ENCODE measurements at regions of chr19 and their contacts with region 1.

Region 1: DNA sequence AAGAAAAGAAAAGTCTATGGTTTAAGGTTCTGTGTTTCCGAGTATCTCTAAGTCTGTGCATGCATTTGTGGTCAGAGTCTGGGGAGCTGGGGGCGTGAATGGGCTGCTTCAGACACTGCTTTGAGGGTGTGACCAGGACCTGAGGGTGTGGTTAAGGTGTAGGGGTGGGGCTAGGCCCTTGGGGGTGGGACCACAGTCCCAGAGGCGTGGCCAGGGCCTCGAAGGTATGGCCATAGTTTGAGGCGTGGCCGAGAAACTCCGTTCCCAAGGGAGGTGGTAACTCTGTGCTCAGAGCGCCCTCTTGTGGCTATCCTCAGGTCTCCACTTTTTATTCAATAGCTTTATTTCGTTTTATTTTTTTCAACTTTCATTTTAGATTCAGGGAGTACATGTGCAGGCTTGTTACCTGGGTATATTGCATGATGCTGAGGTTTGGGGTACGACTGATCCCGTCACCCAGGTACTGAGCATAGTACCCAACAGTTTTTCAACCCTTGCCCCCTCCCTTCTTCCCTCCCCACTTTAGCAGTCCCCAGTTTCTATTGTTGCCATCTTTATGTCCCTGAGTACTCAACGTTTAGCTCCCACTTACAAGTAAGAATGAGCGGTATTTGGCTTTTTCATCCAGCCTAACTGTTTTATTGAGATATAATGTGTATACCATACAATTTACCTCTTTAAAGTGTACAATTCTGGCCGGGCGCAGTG is 7.0 kb upstream of the CBLC start:
- DNase-seq: peak; percentile 96
- ATAC-seq: peak; percentile 95
- H3K4me3 ChIP-seq: peak overlapping the region in 1 of 2 experiments; percentile 9; a peak in 1 of 4 replicates
- H3K27ac ChIP-seq: peak overlapping the region; percentile 18; the same call in 1 of the 2 replicates
- H3K4me1 ChIP-seq: peaks cover 33 to 50% of the 10 kb centered on the region in 2 experiments
- H3K27me3 ChIP-seq: no peaks in the 10 kb centered on the region
- CTCF ChIP-seq: peak; percentile 62 to 93 (median 83); a peak in 5 of 6 replicates
- POLR2A ChIP-seq: no peak
- RAD21 ChIP-seq: peak; percentile 99

Region 2: DNA sequence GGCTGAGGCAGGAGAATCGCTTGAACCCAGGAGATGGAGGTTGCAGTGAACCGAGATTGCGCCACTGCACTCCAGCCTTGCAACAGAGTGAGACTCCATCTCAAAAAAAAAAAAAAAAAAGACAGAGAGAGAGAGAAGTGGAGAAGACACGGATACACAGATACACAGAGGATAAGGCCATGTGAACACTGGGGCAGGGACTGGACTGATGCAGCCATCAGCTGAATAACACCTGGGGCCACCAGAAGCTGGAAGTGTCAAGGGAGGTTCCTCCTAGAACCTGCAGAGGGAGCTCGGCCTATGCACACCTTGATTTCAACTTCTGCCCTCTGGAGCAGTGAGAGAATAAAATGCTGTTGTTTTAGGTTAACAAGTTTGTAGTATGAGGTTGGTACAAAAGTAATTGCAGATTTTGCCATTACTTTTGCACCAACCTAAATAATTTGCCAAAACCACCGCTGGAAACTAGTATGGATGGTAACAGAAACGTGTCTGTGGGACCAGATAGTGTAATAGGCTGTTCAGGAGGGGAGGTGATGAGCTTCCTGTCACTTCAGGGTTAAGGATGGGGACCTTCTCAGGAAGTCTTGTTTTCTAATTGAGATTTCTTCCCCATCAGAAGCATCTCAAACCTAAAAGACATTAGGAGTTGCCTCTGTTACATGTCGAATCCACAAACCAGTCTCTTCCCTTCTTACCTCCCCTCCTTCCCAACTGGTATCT is 193.7 kb before region 1 on chr19:
- CTCF ChIA-PET with region 1: interaction called, 19 read pairs
- POLR2A ChIA-PET with region 1: no interaction called
- RAD21 ChIA-PET with region 1: interaction called, 3 to 5 read pairs
- intact Hi-C with region 1: loop called (anchors 2 kb)
- DNase-seq: peak; percentile 39
- ATAC-seq: peak; percentile 97
- H3K4me3 ChIP-seq: no peak overlapping the region
- H3K27ac ChIP-seq: no peak overlapping the region
- H3K4me1 ChIP-seq: peaks cover 0 to 3% of the 10 kb centered on the region in 2 experiments; a peak in 1 of 4 replicates
- H3K27me3 ChIP-seq: no peaks in the 10 kb centered on the region
- CTCF ChIP-seq: peak; percentile 84 to 91 (median 85)
- POLR2A ChIP-seq: no peak
- RAD21 ChIP-seq: peak; percentile 89

Region 3: GRCh38 chr19:44587963-44588770 is 182.5 kb before region 1 on chr19:
- CTCF ChIA-PET with region 1: interaction called, 9 read pairs
- POLR2A ChIA-PET with region 1: interaction called, 4 read pairs
- RAD21 ChIA-PET with region 1: interaction called in 1 of 2 experiments, 3 read pairs
- intact Hi-C with region 1: loop called (anchors 2 kb)
- DNase-seq: peak; percentile 78
- ATAC-seq: peak; percentile 89
- H3K4me3 ChIP-seq: peak overlapping the region; percentile 37 to 50
- H3K27ac ChIP-seq: peak overlapping the region; percentile 66
- H3K4me1 ChIP-seq: peaks cover 18 to 51% of the 10 kb centered on the region in 2 experiments
- H3K27me3 ChIP-seq: no peaks in the 10 kb centered on the region
- CTCF ChIP-seq: peak in 2 of 3 experiments; percentile 27 to 35; a peak in 1 of 6 replicates
- POLR2A ChIP-seq: no peak
- RAD21 ChIP-seq: peak; percentile 62

Region 4: DNA sequence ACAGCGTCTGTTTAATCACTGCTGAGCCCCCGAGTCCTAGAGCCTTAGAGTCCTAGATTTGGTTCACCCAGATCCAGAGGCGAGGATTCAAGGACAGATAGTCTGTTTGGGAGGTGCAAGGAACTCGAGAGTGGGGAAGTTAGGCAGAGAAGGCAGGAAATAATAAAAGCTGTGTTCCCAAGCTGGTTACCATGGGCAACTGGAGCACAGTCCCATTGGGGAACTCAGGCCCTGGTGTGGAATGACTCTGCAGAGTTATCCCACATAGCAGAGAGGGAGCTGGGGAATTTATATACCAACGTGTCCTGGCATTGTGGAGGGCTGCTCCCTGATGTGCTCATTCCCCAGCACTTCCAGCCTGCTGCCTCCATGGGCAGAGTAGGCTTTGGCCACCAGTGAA is 147.6 kb before region 1 on chr19:
- CTCF ChIA-PET with region 1: no interaction called
- POLR2A ChIA-PET with region 1: no interaction called
- RAD21 ChIA-PET with region 1: no interaction called
- intact Hi-C with region 1: no loop called
- DNase-seq: no peak
- ATAC-seq: no peak
- H3K4me3 ChIP-seq: no peak overlapping the region
- H3K27ac ChIP-seq: no peak overlapping the region
- H3K4me1 ChIP-seq: peaks cover 13 to 29% of the 10 kb centered on the region in 2 experiments
- H3K27me3 ChIP-seq: no peaks in the 10 kb centered on the region
- CTCF ChIP-seq: no peak
- POLR2A ChIP-seq: no peak
- RAD21 ChIP-seq: no peak

Region 5: DNA sequence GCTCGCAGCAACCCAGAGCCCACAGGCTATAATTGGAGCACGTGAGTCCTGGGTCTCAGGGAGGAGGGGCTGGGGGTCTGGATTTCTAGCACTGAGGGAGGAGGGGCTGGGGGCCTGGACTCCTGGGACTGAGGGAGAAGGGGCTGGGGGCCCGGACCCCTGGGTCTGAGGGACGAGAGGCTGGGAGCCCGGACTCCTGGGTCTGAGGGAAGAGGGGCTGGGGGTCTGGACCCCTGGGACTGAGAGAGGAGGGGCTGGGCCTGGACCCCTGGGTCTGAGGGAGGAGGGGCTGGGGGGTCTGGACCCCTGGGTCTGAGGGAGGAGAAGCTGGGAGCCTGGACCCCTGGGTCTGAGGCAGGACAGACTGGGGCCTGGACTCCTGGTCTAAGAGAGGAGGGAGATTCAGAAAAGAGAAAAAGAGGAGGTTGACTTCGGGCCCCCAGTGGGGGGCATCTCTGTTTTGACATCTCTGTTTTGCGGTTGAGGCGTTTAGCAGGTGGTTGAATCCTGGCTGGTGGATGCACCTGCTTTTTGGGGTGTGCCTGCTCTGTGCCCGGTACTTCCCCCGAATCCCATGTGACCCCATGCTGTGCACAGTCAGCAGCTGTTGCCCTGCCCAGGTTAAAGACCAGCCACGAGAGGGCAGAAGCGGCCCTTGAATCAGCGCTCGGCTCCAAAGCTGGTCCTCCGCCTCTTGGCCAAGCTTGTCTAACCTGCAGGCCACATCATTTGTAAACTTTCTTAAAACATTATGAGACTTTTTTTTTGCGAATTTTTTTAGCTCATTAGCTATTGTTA is 116.5 kb before region 1 on chr19:
- CTCF ChIA-PET with region 1: interaction called, 15 read pairs
- POLR2A ChIA-PET with region 1: no interaction called
- RAD21 ChIA-PET with region 1: no interaction called
- intact Hi-C with region 1: no loop called
- DNase-seq: no peak
- ATAC-seq: peak; percentile 67
- H3K4me3 ChIP-seq: no peak overlapping the region
- H3K27ac ChIP-seq: no peak overlapping the region
- H3K4me1 ChIP-seq: no peaks in the 10 kb centered on the region
- H3K27me3 ChIP-seq: no peaks in the 10 kb centered on the region
- CTCF ChIP-seq: peak; percentile 22 to 59 (median 43); a peak in 5 of 6 replicates
- POLR2A ChIP-seq: no peak
- RAD21 ChIP-seq: peak; percentile 55

Region 6: DNA sequence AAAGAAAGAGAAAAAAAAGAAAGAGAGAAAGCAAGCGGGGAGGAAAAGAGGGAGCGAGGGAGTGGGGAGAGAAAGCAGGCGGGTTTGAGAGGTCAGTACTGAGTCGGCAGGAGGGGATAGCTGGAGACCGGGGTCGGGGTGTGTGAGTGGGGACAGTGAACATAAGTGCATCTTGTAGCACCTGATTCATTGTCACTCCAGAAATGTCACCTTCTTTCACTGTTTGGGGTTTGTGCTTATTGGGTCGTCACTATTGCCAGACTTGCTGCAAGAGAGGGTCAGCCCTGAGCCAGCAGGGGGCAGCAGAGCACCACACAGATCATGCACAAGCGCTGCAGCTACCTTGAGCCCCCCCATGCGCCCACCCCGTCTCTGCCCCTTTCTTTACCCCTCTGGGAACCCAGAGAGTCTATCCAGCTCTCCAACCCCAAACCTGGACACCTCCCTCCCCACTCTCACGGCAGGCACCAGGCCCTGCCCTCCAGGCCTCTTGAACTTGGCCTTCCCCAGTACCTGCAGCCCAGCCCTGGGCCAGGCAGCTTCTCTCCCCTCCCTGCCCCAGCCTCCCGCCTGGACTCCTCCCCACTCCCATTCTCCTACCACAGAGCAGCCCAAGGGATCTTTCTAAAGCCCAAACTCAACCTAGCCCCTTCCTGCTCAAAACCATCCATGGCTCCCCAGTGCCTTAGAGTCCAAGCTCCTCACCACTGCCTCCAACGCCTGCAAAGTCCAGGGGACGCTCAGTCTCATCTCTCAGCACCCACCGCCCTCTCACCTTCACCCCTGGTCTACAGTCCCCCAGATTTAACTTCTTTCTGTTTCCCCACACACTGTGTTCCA is 81.4 kb before region 1 on chr19:
- CTCF ChIA-PET with region 1: interaction called, 56 read pairs
- POLR2A ChIA-PET with region 1: interaction called, 7 read pairs
- RAD21 ChIA-PET with region 1: interaction called, 10 to 12 read pairs
- intact Hi-C with region 1: loop called (anchors 1 kb)
- DNase-seq: peak; percentile 50
- ATAC-seq: peak; percentile 60
- H3K4me3 ChIP-seq: no peak overlapping the region
- H3K27ac ChIP-seq: peak overlapping the region; percentile 43; the same call in 1 of the 2 replicates
- H3K4me1 ChIP-seq: peaks cover 48 to 70% of the 10 kb centered on the region in 2 experiments
- H3K27me3 ChIP-seq: no peaks in the 10 kb centered on the region
- CTCF ChIP-seq: peak; percentile 68 to 97 (median 95)
- POLR2A ChIP-seq: no peak
- RAD21 ChIP-seq: peak; percentile 92

Region 7: GRCh38 chr19:44752816-44753618 is 17.7 kb before region 1 on chr19:
- CTCF ChIA-PET with region 1: interaction called, 20 read pairs
- POLR2A ChIA-PET with region 1: interaction called, 5 read pairs
- RAD21 ChIA-PET with region 1: interaction called in 1 of 2 experiments, 3 read pairs
- intact Hi-C with region 1: no loop called
- DNase-seq: no peak
- ATAC-seq: peak; percentile 67
- H3K4me3 ChIP-seq: peak overlapping the region; percentile 50 to 70
- H3K27ac ChIP-seq: peak overlapping the region; percentile 95
- H3K4me1 ChIP-seq: peaks cover 35 to 68% of the 10 kb centered on the region in 2 experiments
- H3K27me3 ChIP-seq: no peaks in the 10 kb centered on the region
- CTCF ChIP-seq: peak in 2 of 3 experiments; percentile 15 to 19; a peak in 2 of 6 replicates
- POLR2A ChIP-seq: no peak
- RAD21 ChIP-seq: no peak